ENCODE measurements at regions of chr6 and their contacts with region 1.

Region 1: DNA sequence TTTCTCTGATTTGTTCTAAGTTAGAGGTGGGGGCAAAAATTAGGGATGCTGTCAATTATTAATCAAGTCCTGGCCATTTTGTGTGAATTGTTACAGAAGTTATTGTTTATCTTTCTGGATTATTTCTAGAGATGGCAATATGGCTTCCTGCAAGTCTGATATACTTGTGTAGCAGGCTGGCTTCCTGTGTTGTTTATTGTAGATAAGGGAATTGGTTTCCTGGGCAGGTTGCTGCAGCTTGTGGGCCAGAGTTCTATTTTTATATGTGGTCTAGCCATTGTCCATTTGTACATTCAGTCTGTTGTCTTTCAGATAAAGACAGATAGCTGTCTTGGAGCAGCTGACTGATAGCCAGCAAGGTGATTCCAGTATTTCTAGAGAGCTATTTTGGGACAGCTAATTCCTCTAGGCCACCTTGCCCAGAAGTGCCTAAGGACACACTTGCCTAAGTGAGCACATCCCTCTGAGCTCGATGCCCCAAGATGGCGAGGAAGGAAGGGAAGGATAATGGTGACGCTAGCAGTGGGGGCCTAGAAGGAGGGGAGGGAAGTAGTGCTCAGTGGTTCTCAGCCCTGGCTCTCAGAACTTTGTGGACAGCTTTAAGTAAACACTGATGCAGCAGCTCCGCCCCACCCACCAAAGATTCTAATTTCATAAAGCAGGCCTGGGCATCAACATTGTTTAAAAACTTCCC is 25.5 kb downstream of the DDO start:
- H3K4me3 ChIP-seq: no peak overlapping the region
- H3K27ac ChIP-seq: no peak overlapping the region
- H3K4me1 ChIP-seq: peaks cover 10% of the 10 kb centered on the region
- CTCF ChIP-seq: no peak

Region 2: DNA sequence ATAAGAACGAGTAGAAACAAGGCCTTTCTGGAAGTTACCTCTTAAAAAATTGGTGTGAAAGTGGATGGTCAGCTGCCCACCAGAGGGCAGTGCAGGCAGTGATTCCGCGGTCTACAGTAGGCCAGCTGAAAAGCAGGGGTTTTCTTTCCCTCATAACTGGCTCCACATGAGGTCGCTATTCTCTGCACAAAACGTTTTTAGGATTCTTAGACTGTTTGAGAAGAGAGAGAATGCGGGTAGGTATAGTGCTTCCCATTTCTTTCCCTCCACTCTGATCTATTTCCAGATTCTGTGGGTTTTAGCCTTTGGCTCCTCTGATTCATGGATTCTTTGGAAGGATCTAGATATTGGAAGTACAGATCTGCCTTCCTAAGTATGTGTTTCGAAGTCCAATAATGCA is 684.6 kb before region 1 on chr6:
- CTCF ChIA-PET with region 1: interaction called, 30 read pairs
- POLR2A ChIA-PET with region 1: no interaction called
- H3K4me3 ChIP-seq: no peak overlapping the region
- H3K27ac ChIP-seq: no peak overlapping the region
- H3K4me1 ChIP-seq: no peaks in the 10 kb centered on the region
- CTCF ChIP-seq: peak; percentile 95

Region 3: DNA sequence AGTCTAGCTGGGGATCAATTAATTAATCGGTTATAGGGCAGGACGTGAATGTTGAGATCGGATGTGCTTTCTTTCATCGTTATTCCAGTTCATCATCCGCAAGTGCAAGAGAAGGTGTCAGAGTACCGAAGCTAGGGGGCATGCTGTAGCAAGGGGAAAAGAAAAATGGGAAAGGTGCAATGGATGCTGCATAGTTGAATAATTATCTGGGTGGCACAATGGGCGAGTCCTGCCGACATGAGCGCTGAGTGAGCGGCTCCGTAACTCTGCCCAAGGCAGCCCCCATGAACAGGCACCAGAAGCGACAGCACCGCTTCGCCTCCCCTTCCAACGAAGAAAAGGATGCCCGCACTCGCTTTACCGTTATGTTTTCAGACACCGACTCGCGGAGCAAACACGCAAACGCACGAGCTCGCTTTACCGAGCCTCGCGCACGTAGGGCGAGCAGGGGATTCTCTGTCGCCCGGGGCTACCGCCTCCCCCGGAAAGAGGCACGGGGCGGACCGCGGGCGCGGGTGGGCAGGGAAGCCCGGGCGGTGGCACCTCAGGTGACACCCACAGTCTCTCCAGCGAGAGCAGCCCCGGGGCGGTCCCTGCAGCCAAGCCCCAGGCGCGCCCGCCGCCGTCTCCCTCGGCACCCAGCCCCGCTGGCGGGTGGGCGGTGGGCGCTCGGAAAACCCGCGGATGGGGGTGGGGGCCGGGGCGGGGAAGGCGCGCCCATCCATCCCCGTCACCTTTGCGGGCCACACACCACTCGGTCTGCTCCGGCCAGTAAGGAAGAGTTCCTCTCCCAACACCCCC is 211.0 kb before region 1 on chr6:
- CTCF ChIA-PET with region 1: interaction called, 11 read pairs
- POLR2A ChIA-PET with region 1: interaction called, 5 read pairs
- H3K4me3 ChIP-seq: peak overlapping the region; percentile 72
- H3K27ac ChIP-seq: peak overlapping the region; percentile 97
- H3K4me1 ChIP-seq: peaks cover 25% of the 10 kb centered on the region
- CTCF ChIP-seq: peak; percentile 93

Region 4: DNA sequence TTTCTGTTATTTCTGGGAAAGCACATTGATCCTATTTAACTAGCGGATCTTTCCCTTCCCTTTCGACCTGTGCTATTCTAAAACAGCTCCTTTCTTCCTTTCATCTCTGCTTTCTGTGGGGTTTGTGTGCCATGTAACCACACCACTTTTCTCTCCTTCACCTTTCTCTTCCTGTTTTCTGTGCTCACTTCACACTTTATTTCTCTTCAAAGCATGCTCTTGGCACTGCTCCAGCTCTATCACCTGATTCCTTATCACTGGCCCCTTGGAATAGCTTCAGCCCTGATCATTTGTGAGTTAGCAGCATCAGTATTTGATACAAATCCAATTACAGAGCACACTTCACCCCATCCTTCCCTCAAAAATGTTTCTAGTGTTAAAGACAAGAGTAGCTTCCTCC is 23.6 kb before region 1 on chr6:
- CTCF ChIA-PET with region 1: interaction called, 12 read pairs
- POLR2A ChIA-PET with region 1: no interaction called
- H3K4me3 ChIP-seq: no peak overlapping the region
- H3K27ac ChIP-seq: no peak overlapping the region
- H3K4me1 ChIP-seq: no peaks in the 10 kb centered on the region
- CTCF ChIP-seq: no peak

Region 5: DNA sequence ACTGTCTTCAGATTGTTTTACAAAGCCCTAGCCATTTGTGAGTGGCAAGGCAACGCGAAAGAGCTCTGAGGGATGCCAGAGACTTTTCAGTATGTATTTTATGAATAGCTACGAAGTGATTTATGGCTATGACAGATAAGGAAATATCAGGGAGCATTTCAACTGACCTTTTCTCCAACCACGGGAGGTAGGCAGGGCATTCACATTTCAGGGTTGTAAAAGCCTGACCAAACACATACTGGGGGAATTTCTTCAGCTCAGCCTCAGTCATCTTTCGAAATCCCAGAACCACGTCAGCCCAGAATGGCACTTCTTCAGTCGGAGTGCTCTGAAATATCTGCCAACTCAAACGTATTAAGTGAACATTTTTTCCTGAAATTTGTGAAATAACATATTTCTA is 14.8 kb after region 1 on chr6:
- CTCF ChIA-PET with region 1: interaction called, 21 read pairs
- POLR2A ChIA-PET with region 1: no interaction called
- H3K4me3 ChIP-seq: no peak overlapping the region
- H3K27ac ChIP-seq: no peak overlapping the region
- H3K4me1 ChIP-seq: no peaks in the 10 kb centered on the region
- CTCF ChIP-seq: no peak

Region 6: DNA sequence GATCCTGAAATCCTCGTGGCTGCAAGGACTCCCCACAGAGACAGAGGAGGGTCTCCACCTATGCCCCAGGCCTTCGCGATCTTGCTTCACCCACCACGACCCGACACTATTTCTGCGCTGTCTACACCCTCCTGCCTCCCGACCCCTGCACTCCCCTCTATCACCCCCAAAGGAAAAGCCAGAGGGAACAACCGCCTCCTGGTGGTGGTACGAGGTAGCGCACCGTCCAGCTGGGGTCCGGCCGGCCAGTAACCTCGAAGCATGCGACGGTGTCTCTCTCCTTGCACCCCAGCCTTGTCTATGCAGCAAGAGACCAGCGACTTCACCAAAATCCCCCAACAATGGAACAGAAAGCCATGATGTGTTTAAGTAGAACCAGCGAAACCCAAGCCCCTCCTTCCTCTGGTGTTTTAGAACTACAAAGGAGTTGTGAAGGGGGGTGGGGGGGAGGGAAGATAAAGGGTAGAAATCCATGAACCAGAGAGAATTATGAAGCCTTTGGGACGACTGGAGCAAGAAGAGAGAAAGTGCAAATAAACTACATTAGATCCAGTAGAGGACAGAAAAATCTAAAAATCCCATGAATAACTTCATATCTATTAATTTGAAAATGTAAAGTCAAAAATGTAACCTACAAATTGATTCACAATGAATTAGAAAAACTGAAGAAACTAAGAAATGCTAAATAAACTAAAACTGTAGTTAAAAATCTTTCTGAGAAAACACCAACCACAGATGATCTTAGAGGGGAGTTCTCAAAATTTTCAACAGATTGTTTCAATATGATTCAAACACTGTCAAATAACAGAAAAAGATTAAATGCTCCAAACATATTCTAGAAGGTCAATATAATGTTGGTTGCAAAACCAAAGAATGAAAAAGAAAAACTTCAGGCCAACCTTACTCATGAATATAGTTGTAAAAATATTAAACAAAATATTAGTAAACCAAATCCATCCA is 257.4 kb after region 1 on chr6:
- CTCF ChIA-PET with region 1: no interaction called
- POLR2A ChIA-PET with region 1: no interaction called
- H3K4me3 ChIP-seq: no peak overlapping the region
- H3K27ac ChIP-seq: no peak overlapping the region
- H3K4me1 ChIP-seq: no peaks in the 10 kb centered on the region
- CTCF ChIP-seq: peak; percentile 23; the same call in 1 of the 2 replicates